Prostate gland (tissue), 2 donors: ENCODE measurements at regions of chr3 and their contacts with region 1.

Region 1: DNA sequence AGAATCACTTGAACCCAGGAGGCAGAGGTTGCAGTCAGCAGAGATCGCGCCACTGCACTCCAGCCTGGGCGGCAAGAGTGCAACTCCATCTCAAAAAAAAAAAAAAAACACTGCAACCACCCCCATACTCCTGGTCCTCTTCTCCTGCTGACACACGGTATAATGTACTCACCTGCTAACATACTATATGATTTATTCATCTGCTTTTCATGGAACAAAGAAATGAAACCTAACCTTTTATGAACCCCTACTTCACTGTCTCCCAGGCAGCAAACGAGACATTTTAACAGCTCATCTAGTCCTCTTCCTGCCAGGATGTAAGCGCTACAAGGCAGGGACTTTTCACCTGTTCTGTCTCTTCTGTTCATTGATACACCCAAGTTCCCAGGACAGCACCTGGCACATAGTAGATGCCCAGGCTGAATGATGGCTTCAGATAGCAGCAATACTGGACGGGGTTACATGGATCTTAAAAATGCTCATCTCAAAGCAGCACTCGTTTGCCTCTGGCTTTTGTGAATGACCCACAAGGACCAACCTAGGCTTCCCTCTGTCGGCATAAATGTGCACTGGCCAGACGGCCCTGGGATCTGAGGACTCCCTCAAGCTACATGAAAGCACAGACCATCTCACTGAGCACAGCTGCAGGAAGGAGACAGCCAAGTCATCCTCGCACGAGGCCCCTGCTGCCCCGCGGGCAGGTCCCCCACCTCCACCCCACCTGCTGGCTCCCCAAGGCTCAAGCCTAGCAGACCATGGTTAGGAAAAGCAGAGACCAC is 20.3 kb downstream of the XXYLT1 start:
- DNase-seq: no peak
- H3K4me3 ChIP-seq: no peak overlapping the region
- H3K27ac ChIP-seq: no peak overlapping the region
- H3K4me1 ChIP-seq: no peaks in the 10 kb centered on the region
- H3K27me3 ChIP-seq: no peaks in the 10 kb centered on the region
- CTCF ChIP-seq: peak in 2 of 4 experiments; percentile 23 to 48
- POLR2A ChIP-seq: no peak

Region 2: DNA sequence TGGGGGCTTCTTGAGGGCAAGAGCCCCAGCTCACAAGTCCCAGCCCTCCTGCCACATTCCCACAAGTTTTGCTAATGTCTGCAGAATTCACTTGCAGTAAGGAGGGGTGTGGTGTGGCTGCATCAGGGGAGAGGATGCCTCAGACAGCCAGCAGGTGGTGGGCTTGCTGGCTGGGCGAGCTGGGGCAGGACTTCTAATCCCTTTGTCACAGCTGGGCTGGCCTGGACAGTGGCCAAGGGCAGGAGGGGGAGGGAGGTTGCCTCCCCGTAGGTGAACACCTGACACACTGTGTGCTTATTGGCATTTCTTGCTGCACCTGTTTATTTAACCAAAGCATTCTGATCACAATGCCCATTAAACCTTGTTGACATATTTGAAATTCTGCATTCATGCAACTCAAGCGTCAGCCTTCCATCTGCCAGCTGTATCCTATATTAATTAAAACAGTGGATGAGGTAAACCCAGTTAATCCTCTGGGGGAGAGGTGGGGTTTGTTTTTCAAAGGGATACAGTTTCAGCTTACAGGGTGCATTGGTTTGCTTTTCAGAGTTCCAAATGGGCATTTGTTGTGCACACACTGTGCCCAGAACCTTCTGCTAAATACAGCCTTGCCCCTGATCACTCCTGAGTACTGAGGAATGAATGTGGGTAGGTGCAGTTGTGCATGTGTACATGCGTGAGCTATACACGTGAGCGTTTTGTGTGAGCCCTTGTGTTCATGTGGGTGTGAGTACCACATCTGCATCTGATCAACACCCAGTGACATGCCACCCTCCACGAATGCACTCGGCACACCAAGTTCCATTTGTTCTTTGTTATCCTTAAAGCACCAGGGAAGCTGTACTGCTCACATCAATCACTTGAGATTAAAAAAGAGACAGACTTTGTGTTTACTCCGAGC is 248.5 kb before region 1 on chr3:
- intact Hi-C with region 1: loop called (anchors 5 kb)
- DNase-seq: peak; percentile 40
- H3K4me3 ChIP-seq: no peak overlapping the region
- H3K27ac ChIP-seq: peak overlapping the region in 1 of 2 donors; percentile 15
- H3K4me1 ChIP-seq: no peaks in the 10 kb centered on the region
- H3K27me3 ChIP-seq: no peaks in the 10 kb centered on the region
- CTCF ChIP-seq: peak in 3 of 4 experiments; percentile 35 to 70 (median 48)
- POLR2A ChIP-seq: no peak

Region 3: GRCh38 chr3:195319060-195319459 is 68.4 kb after region 1 on chr3:
- intact Hi-C with region 1: no loop called
- DNase-seq: no peak
- H3K4me3 ChIP-seq: no peak overlapping the region
- H3K27ac ChIP-seq: no peak overlapping the region
- H3K4me1 ChIP-seq: no peaks in the 10 kb centered on the region
- H3K27me3 ChIP-seq: no peaks in the 10 kb centered on the region
- CTCF ChIP-seq: no peak
- POLR2A ChIP-seq: no peak

Region 4: GRCh38 chr3:195337747-195338146 is 87.1 kb after region 1 on chr3:
- intact Hi-C with region 1: no loop called
- DNase-seq: no peak
- H3K4me3 ChIP-seq: no peak overlapping the region
- H3K27ac ChIP-seq: no peak overlapping the region
- H3K4me1 ChIP-seq: no peaks in the 10 kb centered on the region
- H3K27me3 ChIP-seq: no peaks in the 10 kb centered on the region
- CTCF ChIP-seq: no peak
- POLR2A ChIP-seq: no peak